ENCODE measurements at regions of chr11 and their contacts with region 1.

Region 1: GRCh38 chr11:119602745-119603373 is 126.1 kb downstream of the NECTIN1 start:
- DNase-seq: peak; percentile 53
- ATAC-seq: no peak
- H3K4me3 Mint-ChIP-seq: no peak overlapping the region
- H3K27ac Mint-ChIP-seq: no peak overlapping the region
- H3K4me1 Mint-ChIP-seq: peaks cover 16% of the 10 kb centered on the region
- H3K27me3 Mint-ChIP-seq: peaks cover 39% of the 10 kb centered on the region
- CTCF ChIP-seq: no peak

Region 2: GRCh38 chr11:119533921-119534736 is 68.7 kb before region 1 on chr11:
- CTCF ChIA-PET with region 1: interaction called, 13 read pairs
- POLR2A ChIA-PET with region 1: no interaction called
- DNase-seq: peak; percentile 91
- ATAC-seq: peak; percentile 90
- H3K4me3 Mint-ChIP-seq: no peak overlapping the region
- H3K27ac Mint-ChIP-seq: 0 out of 2 replicates have a peak overlapping the region, but pooled peaks have one; percentile 25
- H3K4me1 Mint-ChIP-seq: peaks cover 6% of the 10 kb centered on the region
- H3K27me3 Mint-ChIP-seq: peaks cover 13% of the 10 kb centered on the region; the same call in 1 of the 2 replicates
- CTCF ChIP-seq: peak; percentile 89

Region 3: DNA sequence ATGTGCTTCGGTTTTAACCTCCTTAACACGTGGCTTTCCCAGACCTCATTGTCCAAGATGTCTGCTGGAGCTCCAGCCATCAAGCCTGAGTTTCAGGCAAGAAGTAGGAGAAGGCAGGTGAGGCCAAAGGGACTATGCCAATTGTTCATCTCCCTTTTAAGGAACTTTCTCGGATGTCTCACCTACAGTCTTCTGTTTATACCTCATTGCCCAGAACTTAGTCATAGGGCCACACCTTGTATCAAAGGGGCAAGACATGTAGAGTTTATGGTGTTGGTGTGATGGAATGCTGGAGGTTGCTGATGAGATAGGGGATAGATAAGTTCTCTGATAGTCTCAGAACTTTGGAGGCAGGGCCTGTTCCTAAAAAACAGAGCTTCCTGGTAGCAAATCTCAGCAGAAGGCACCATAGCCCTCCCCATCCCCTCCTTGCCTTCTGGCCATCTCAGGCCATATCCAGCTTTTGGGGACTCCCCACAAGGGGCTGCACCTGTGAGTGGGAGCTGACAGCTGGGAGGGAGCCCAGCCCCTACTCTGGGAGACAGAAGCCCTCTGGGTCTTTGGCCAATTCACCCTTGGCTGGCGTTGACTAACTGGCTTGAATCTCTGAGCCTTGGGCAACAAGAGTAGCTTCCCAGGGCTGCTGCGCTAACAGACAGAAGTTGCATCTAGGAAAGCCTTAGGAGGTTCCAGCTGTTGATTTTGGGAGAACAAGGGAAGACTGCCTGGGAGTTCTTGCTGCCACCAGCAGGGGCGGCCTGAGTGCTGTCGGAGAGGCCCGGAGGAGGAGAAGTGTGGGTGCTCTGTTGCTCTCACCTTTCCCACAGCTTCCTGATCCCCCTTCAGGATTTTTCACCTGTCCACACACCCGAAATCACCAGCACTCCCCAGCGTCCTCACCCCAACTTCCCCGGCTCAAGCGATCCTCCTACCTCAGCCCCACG is 30.1 kb before region 1 on chr11:
- CTCF ChIA-PET with region 1: interaction called, 24 read pairs
- POLR2A ChIA-PET with region 1: no interaction called
- DNase-seq: peak; percentile 36
- ATAC-seq: peak; percentile 68
- H3K4me3 Mint-ChIP-seq: no peak overlapping the region
- H3K27ac Mint-ChIP-seq: no peak overlapping the region
- H3K4me1 Mint-ChIP-seq: peaks cover 10% of the 10 kb centered on the region
- H3K27me3 Mint-ChIP-seq: peaks cover 6% of the 10 kb centered on the region
- CTCF ChIP-seq: no peak

Region 4: DNA sequence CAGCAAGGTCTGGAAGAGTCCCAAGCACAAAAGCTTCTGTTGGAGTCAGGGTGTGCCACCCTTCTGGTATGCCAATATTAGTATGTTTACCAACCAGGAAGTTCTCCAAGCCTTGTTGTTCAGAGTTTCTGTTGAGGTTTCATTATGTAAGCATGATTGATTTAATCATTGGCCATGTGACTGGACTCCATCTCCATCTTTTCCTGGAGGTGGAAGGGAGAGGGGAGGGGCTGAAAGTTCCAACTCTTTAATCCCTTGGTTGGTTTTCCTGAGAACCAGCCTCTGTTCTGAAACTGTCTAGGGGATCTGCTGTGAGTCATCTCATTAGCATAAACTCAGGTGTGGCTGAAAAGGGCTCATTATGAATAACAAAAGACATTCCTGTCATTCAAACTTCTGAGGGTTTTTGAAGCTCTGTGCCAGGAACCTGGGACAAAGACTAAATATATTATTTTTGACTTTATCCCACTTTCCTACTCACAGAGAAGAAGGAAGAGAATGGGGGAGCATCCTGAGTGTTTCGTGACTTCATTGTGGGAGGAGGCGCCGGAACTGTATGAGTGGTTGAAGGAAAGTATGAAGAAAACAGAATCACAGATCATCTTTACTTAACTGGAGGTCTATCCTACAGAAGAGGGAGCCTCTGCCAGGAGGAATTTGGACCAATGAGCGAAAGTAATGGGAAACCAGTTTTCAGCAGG is 12.1 kb before region 1 on chr11:
- CTCF ChIA-PET with region 1: interaction called, 28 read pairs
- POLR2A ChIA-PET with region 1: no interaction called
- DNase-seq: no peak
- ATAC-seq: peak; percentile 89
- H3K4me3 Mint-ChIP-seq: no peak overlapping the region; the same call in 1 of the 2 replicates
- H3K27ac Mint-ChIP-seq: peak overlapping the region; percentile 97
- H3K4me1 Mint-ChIP-seq: peaks cover 28% of the 10 kb centered on the region
- H3K27me3 Mint-ChIP-seq: peaks cover 16% of the 10 kb centered on the region
- CTCF ChIP-seq: no peak

Region 5: GRCh38 chr11:119624102-119624615 is 21.3 kb after region 1 on chr11:
- CTCF ChIA-PET with region 1: interaction called, 15 read pairs
- POLR2A ChIA-PET with region 1: no interaction called
- DNase-seq: no peak
- ATAC-seq: peak; percentile 34
- H3K4me3 Mint-ChIP-seq: no peak overlapping the region
- H3K27ac Mint-ChIP-seq: no peak overlapping the region
- H3K4me1 Mint-ChIP-seq: peaks cover 41% of the 10 kb centered on the region
- H3K27me3 Mint-ChIP-seq: peaks cover 4% of the 10 kb centered on the region
- CTCF ChIP-seq: peak; percentile 90

Region 6: GRCh38 chr11:119774172-119774763 is 171.4 kb after region 1 on chr11:
- CTCF ChIA-PET with region 1: no interaction called
- POLR2A ChIA-PET with region 1: no interaction called
- DNase-seq: peak; percentile 64
- ATAC-seq: peak; percentile 30; the same call in 1 of the 2 replicates
- H3K4me3 Mint-ChIP-seq: no peak overlapping the region
- H3K27ac Mint-ChIP-seq: no peak overlapping the region
- H3K4me1 Mint-ChIP-seq: peaks cover 3% of the 10 kb centered on the region; the same call in 1 of the 2 replicates
- H3K27me3 Mint-ChIP-seq: peaks cover 11% of the 10 kb centered on the region
- CTCF ChIP-seq: no peak

Measured in WTC11 (cell line).